GM12878 (cell line): ENCODE measurements at regions of chr4 and their contacts with region 1.

Region 1: DNA sequence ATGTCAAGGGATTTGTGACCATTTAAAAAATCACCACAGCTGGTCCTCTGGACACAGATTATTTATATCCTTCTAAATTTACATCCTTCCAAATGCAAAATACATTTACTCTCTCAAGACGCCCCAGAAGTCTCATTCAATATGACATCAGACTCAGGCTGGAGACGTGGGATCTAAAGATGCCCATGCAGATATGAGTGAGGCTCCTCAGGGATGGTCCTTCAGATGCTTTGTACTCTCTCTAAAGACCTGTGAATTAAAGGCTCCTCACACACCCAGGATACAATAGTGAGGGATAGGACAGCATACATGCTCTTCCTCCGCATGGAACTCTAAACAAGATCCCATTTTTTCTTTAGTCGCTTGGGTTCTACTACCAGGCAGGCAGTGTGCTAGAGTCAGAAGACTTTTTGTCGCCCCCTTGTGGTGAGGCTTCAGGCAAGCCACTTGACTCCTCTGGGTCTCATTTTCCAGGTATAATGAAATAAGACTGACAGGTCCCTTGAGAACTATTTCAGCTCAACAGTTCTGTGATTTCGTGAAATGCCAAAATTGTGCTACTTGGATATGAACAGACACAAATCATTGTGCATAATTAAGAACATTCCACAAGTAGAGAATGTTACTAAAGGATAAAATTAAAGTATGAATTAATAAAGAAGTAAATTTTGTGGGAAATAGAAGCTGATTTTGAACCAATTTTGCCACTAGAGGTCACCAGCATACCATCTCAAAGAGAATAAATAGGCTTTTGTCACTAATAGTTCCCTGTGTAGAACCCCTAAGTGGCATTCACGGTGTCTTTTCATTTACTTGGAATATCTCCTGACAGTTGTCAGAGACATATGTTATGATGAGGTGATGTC is 13.7 kb upstream of the SCOC start:
- DNase-seq: no peak
- ATAC-seq: peak; percentile 100
- H3K4me3 ChIP-seq: no peak overlapping the region
- H3K27ac ChIP-seq: no peak overlapping the region
- H3K4me1 ChIP-seq: no peaks in the 10 kb centered on the region
- H3K27me3 ChIP-seq: no peaks in the 10 kb centered on the region
- CTCF ChIP-seq: peak; percentile 68 to 77 (median 74)
- EP300 ChIP-seq: no peak
- POLR2A ChIP-seq: no peak
- RAD21 ChIP-seq: peak; percentile 62

Region 2: GRCh38 chr4:139858436-139859225 is 501.2 kb before region 1 on chr4:
- CTCF ChIA-PET with region 1: no interaction called
- POLR2A ChIA-PET with region 1: no interaction called
- RAD21 ChIA-PET with region 1: no interaction called
- SMC1A ChIA-PET with region 1: no interaction called
- in situ Hi-C with region 1: no loop called
- intact Hi-C with region 1: no loop called
- DNase-seq: peak; percentile 35
- ATAC-seq: peak; percentile 95
- H3K4me3 ChIP-seq: no peak overlapping the region
- H3K27ac ChIP-seq: no peak overlapping the region
- H3K4me1 ChIP-seq: peaks cover 3% of the 10 kb centered on the region; the same call in 1 of the 2 replicates
- H3K27me3 ChIP-seq: peaks cover 5 to 15% of the 10 kb centered on the region in 2 experiments; a peak in 3 of 4 replicates
- CTCF ChIP-seq: no peak
- EP300 ChIP-seq: peak in 1 of 2 experiments; percentile 36; a peak in 2 of 4 replicates
- POLR2A ChIP-seq: no peak
- RAD21 ChIP-seq: no peak

Region 3: GRCh38 chr4:140153718-140154571 is 205.8 kb before region 1 on chr4 and contains the start of gene MAML3:
- CTCF ChIA-PET with region 1: no interaction called
- POLR2A ChIA-PET with region 1: no interaction called
- RAD21 ChIA-PET with region 1: no interaction called
- SMC1A ChIA-PET with region 1: no interaction called
- in situ Hi-C with region 1: no loop called
- intact Hi-C with region 1: no loop called
- DNase-seq: no peak
- ATAC-seq: peak; percentile 77
- H3K4me3 ChIP-seq: peak within 1 kb of the TSS; percentile 42
- H3K27ac ChIP-seq: no peak within 1 kb of the TSS
- H3K4me1 ChIP-seq: peaks cover 14% of the 10 kb centered on the region
- H3K27me3 ChIP-seq: peaks cover 10 to 29% of the 10 kb centered on the region in 2 experiments
- CTCF ChIP-seq: no peak
- EP300 ChIP-seq: no peak
- POLR2A ChIP-seq: no peak
- RAD21 ChIP-seq: no peak
- polyA plus RNA-seq, gene MAML3: under 0.01 TPM in 1 of 2 experiments, not detected in the other

Region 4: GRCh38 chr4:140343303-140343702 is 16.5 kb before region 1 on chr4:
- CTCF ChIA-PET with region 1: interaction called, 10 read pairs
- POLR2A ChIA-PET with region 1: no interaction called
- RAD21 ChIA-PET with region 1: no interaction called
- SMC1A ChIA-PET with region 1: interaction called, 5 read pairs
- in situ Hi-C with region 1: no loop called
- intact Hi-C with region 1: no loop called
- DNase-seq: no peak
- ATAC-seq: no peak
- H3K4me3 ChIP-seq: no peak overlapping the region
- H3K27ac ChIP-seq: no peak overlapping the region
- H3K4me1 ChIP-seq: no peaks in the 10 kb centered on the region
- H3K27me3 ChIP-seq: no peaks in the 10 kb centered on the region
- CTCF ChIP-seq: no peak
- EP300 ChIP-seq: no peak
- POLR2A ChIP-seq: no peak
- RAD21 ChIP-seq: no peak

Region 5: DNA sequence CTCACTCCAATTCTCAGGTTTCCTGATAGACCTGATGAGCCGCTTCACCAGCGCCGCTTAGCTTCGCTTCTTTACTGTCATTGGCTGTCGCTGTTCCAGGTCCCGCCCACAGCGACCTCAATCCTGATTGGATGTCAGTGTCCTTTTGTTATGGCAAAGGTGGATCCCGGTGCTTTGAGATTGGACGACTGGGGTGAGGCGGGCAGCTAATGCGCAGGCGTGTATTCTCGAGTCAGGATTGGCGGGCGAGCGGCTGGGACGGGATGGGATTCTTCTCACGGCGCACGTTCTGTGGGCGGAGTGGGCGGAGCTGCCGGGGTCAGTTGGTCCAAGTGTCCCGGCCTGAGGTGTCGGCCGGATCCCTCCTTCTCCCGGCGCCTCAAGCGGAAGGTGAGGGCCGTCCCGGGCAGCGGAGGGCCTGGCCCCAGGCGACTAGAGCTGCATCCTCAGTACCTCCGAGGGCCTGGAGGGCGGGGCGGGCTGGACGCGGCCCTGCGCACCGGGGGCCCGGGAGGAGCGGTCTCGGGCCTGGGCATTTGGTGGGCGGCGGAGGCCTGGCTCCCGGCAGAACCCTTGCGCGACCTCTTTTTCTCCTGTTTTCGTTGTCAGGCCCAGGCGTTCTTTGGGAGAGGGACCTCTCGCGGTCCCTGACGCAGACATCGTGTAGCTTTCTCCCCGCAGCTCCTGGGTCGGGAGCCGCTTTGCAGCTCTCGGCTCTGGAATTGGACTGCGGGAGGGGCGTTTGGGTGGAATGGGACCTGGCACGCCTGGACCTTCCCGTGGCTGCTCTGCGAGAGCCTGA is 13.7 kb after region 1 on chr4 and contains the start of gene SCOC:
- CTCF ChIA-PET with region 1: interaction called, 86 read pairs
- POLR2A ChIA-PET with region 1: interaction called, 4 read pairs
- RAD21 ChIA-PET with region 1: interaction called, 10 read pairs
- SMC1A ChIA-PET with region 1: interaction called, 11 read pairs
- in situ Hi-C with region 1: no loop called
- intact Hi-C with region 1: no loop called
- DNase-seq: peak; percentile 98
- ATAC-seq: peak; percentile 96
- H3K4me3 ChIP-seq: peak within 1 kb of the TSS; percentile 91
- H3K27ac ChIP-seq: peak within 1 kb of the TSS; percentile 68
- H3K4me1 ChIP-seq: peaks cover 7% of the 10 kb centered on the region
- H3K27me3 ChIP-seq: no peaks in the 10 kb centered on the region
- CTCF ChIP-seq: no peak
- EP300 ChIP-seq: 0 out of 4 replicates have a peak, but pooled peaks of 1 of the 2 experiments have one; percentile 8
- POLR2A ChIP-seq: peak; percentile 89
- RAD21 ChIP-seq: no peak
- polyA plus RNA-seq, gene SCOC: 118 to 154 TPM

Region 6: DNA sequence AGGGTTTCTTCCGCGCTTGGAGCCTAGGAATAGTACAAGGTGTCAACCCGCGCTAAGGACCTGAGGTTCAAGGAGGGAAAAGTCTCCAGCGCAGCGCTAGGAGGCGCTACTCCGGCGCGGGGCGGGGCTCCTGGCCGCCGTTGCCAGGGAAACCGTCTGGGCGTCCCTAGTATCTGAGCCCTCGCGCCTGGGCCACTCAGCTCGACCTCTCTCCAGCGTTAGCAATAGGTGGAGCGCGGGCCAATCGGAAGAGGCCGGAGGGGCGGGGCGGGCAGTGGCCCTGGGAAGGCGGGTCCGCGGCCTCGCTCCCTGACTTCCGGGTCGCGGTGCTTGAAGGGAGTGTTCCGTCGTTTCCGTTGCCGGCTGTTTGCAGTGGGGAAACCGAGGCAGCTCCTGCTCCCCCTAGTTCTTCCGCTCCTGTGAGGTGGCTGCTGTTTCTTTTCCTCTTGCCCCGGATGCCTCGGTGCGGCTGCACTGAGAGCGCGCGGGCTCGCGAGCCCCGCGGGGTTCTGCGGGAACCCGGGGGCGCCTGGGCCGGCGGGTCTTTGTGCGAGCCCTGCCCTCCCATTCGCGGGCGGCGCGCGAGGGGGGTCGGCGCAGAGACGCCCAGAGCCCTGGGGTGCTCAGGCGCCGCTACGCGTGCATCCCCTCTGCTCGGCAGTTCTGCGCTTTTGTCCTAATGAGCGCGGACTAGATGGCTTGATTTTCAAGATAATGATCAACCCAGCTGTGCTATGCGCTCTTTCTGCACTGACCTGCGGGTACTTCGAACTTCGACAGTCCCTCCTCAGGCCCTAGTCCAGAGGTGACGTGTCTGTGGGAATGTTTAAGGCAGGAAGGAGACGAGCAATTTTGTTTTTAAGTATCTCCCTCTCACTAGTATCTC is 164.3 kb after region 1 on chr4 and contains the start of gene ELMOD2:
- CTCF ChIA-PET with region 1: interaction called, 11 read pairs
- POLR2A ChIA-PET with region 1: no interaction called
- RAD21 ChIA-PET with region 1: no interaction called
- SMC1A ChIA-PET with region 1: no interaction called
- in situ Hi-C with region 1: no loop called
- intact Hi-C with region 1: no loop called
- DNase-seq: peak; percentile 74
- ATAC-seq: peak; percentile 100
- H3K4me3 ChIP-seq: peak within 1 kb of the TSS; percentile 87
- H3K27ac ChIP-seq: peak within 1 kb of the TSS; percentile 75
- H3K4me1 ChIP-seq: no peaks in the 10 kb centered on the region
- H3K27me3 ChIP-seq: no peaks in the 10 kb centered on the region
- CTCF ChIP-seq: peak; percentile 92 to 96 (median 96)
- EP300 ChIP-seq: no peak
- POLR2A ChIP-seq: peak; percentile 94
- RAD21 ChIP-seq: peak; percentile 38
- polyA plus RNA-seq, gene ELMOD2: 6.5 to 7.9 TPM

Region 7: GRCh38 chr4:140609548-140610425 is 250.0 kb after region 1 on chr4:
- CTCF ChIA-PET with region 1: interaction called, 88 read pairs
- POLR2A ChIA-PET with region 1: no interaction called
- RAD21 ChIA-PET with region 1: interaction called, 28 read pairs
- SMC1A ChIA-PET with region 1: interaction called, 39 read pairs
- in situ Hi-C with region 1: loop called (anchors 5 kb)
- intact Hi-C with region 1: loop called (anchors 1 kb)
- DNase-seq: peak; percentile 19
- ATAC-seq: peak; percentile 91
- H3K4me3 ChIP-seq: no peak overlapping the region
- H3K27ac ChIP-seq: no peak overlapping the region
- H3K4me1 ChIP-seq: no peaks in the 10 kb centered on the region
- H3K27me3 ChIP-seq: no peaks in the 10 kb centered on the region
- CTCF ChIP-seq: peak; percentile 39 to 68 (median 52); a peak in 5 of 6 replicates
- EP300 ChIP-seq: no peak
- POLR2A ChIP-seq: no peak
- RAD21 ChIP-seq: peak; percentile 85

Region 8: DNA sequence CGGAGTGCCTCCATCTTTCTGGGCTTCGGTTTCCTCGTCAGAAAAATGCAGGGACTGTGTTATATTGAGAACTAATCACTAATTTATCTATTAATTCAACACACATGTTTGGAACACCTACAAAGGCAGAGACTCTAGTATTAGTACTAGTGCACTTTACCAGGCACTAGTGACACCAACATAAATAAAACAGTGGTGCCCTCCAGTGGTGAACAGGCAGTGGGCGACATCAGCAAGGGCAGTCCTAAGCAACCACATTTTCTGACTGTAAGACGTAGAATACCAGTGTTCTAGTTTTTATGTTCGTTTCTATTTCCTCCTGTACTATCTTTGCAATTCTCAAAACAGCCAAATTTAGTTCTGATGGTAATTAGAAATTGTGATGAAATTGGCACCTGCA is 278.0 kb after region 1 on chr4:
- CTCF ChIA-PET with region 1: interaction called, 12 read pairs
- POLR2A ChIA-PET with region 1: no interaction called
- RAD21 ChIA-PET with region 1: interaction called, 5 read pairs
- SMC1A ChIA-PET with region 1: interaction called, 4 read pairs
- in situ Hi-C with region 1: no loop called
- intact Hi-C with region 1: loop called (anchors 1 kb)
- DNase-seq: no peak
- ATAC-seq: peak; percentile 96
- H3K4me3 ChIP-seq: no peak overlapping the region
- H3K27ac ChIP-seq: no peak overlapping the region
- H3K4me1 ChIP-seq: no peaks in the 10 kb centered on the region
- H3K27me3 ChIP-seq: no peaks in the 10 kb centered on the region
- CTCF ChIP-seq: peak; percentile 54 to 67 (median 65); a peak in 5 of 6 replicates
- EP300 ChIP-seq: no peak
- POLR2A ChIP-seq: no peak
- RAD21 ChIP-seq: peak; percentile 56